ENCODE measurements at regions of chr5 and their contacts with region 1.

Region 1: GRCh38 chr5:111820072-111820471 is 63.1 kb upstream of the NREP start:
- DNase-seq: no peak
- H3K4me3 ChIP-seq: no peak overlapping the region
- H3K27ac ChIP-seq: no peak overlapping the region
- H3K4me1 ChIP-seq: no peaks in the 10 kb centered on the region
- H3K27me3 ChIP-seq: no peaks in the 10 kb centered on the region
- CTCF ChIP-seq: peak in 1 of 3 experiments; percentile 30; a peak in 1 of 4 replicates
- EP300 ChIP-seq: no peak
- POLR2A ChIP-seq: no peak
- RAD21 ChIP-seq: peak; percentile 51 to 61

Region 2: DNA sequence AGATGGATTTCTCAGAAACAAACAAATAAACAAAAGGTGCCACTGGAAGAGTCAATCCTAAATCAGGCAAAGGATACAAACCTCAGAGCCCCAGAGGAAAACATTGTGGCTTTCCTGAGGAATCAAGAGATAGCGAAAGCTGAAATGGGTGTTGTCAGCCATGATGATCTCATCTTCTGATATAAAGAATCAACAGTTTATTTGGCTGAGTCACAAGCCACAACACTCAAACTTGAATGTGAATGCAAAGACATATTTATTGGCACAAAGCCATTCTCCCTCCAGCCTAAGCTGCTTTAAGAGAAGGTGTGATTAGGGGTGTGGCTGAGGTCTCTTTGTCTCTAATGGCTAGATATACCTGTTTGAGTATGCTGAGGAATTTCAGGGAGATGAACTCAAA is 10.3 kb after region 1 on chr5:
- CTCF ChIA-PET with region 1: interaction called, 30 read pairs
- POLR2A ChIA-PET with region 1: no interaction called
- DNase-seq: no peak
- H3K4me3 ChIP-seq: no peak overlapping the region
- H3K27ac ChIP-seq: no peak overlapping the region
- H3K4me1 ChIP-seq: no peaks in the 10 kb centered on the region
- H3K27me3 ChIP-seq: no peaks in the 10 kb centered on the region
- CTCF ChIP-seq: no peak
- EP300 ChIP-seq: no peak
- POLR2A ChIP-seq: no peak
- RAD21 ChIP-seq: no peak

Region 3: DNA sequence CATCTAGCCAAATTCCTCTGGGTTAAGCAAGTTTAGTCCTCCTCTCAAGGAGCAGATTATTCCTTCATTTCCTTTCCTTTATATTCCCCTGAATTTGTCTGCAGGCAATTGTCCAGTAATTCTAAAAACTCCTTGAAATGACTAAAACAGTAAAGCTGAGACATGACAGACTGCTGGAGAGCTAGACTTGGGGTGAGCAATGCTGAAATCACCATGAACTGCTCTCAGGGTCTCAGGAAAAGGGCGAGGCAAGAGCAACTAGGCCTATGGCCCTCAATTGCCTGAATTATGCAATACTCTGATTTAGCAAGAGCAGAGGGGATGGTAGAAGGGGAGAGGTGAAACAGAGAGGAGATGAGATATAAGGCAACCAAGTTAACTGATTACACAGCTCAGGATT is 109.8 kb after region 1 on chr5:
- CTCF ChIA-PET with region 1: no interaction called
- POLR2A ChIA-PET with region 1: no interaction called
- DNase-seq: no peak
- H3K4me3 ChIP-seq: no peak overlapping the region
- H3K27ac ChIP-seq: no peak overlapping the region
- H3K4me1 ChIP-seq: no peaks in the 10 kb centered on the region
- H3K27me3 ChIP-seq: no peaks in the 10 kb centered on the region
- CTCF ChIP-seq: no peak
- EP300 ChIP-seq: no peak
- POLR2A ChIP-seq: no peak
- RAD21 ChIP-seq: no peak